GM12878 (cell line): ENCODE measurements at regions of chr3 and their contacts with region 1.

Region 1: GRCh38 chr3:137692803-137693431 is 71.2 kb upstream of the SOX14 start:
- DNase-seq: peak; percentile 3
- ATAC-seq: peak; percentile 86
- H3K4me3 ChIP-seq: no peak overlapping the region
- H3K27ac ChIP-seq: no peak overlapping the region
- H3K4me1 ChIP-seq: no peaks in the 10 kb centered on the region
- H3K27me3 ChIP-seq: no peaks in the 10 kb centered on the region
- CTCF ChIP-seq: peak; percentile 64 to 75 (median 66)
- EP300 ChIP-seq: no peak
- POLR2A ChIP-seq: no peak
- RAD21 ChIP-seq: peak; percentile 80

Region 2: DNA sequence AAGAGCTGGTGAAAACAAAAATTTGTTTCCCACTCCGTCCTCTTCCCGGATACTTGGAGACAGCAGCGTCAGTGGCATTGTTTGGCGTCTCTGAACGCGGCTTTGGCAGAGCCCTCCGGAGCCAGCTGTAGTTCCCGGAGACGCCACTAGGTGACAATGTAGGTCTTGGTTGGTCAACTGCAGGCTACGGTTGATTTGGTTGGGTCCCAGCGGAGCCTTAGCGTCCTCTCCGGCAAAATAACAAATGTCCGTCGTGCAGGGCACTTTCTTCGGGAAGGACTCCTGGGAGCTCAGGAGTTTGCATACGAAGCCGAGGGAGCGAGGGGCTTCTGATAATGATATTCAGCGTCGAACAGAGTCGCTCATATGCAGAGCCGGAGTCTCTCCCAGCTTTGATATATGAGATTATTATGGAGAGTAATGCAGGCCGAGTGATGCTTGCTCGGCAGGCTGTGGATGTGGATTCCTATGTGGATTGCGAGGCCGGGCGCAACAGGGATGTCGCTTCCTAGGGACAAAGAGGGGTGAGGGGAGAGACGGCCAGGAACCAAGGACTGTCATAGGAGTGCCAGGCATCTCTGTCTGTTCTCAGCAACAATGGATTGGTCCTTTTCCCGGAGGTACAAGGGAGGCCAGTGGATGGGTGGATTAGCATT is 660.3 kb before region 1 on chr3:
- CTCF ChIA-PET with region 1: no interaction called
- POLR2A ChIA-PET with region 1: no interaction called
- RAD21 ChIA-PET with region 1: interaction called, 4 read pairs
- SMC1A ChIA-PET with region 1: interaction called, 3 read pairs
- in situ Hi-C with region 1: no loop called
- intact Hi-C with region 1: loop called (anchors 2 kb)
- DNase-seq: peak; percentile 13
- ATAC-seq: peak; percentile 97
- H3K4me3 ChIP-seq: peak overlapping the region; percentile 22; the same call in 1 of the 2 replicates
- H3K27ac ChIP-seq: no peak overlapping the region
- H3K4me1 ChIP-seq: no peaks in the 10 kb centered on the region
- H3K27me3 ChIP-seq: no peaks in the 10 kb centered on the region
- CTCF ChIP-seq: peak; percentile 96 to 100 (median 99)
- EP300 ChIP-seq: no peak
- POLR2A ChIP-seq: no peak
- RAD21 ChIP-seq: peak; percentile 95

Region 3: GRCh38 chr3:137110484-137110883 is 582.4 kb before region 1 on chr3:
- CTCF ChIA-PET with region 1: interaction called, 44 read pairs
- POLR2A ChIA-PET with region 1: no interaction called
- RAD21 ChIA-PET with region 1: interaction called, 22 read pairs
- SMC1A ChIA-PET with region 1: interaction called, 22 read pairs
- in situ Hi-C with region 1: no loop called
- intact Hi-C with region 1: loop called (anchors 2 kb)
- DNase-seq: no peak
- ATAC-seq: peak; percentile 85
- H3K4me3 ChIP-seq: no peak overlapping the region
- H3K27ac ChIP-seq: no peak overlapping the region
- H3K4me1 ChIP-seq: no peaks in the 10 kb centered on the region
- H3K27me3 ChIP-seq: no peaks in the 10 kb centered on the region; a peak in 1 of 4 replicates
- CTCF ChIP-seq: peak; percentile 68 to 89 (median 88)
- EP300 ChIP-seq: no peak
- POLR2A ChIP-seq: no peak
- RAD21 ChIP-seq: peak; percentile 95

Region 4: DNA sequence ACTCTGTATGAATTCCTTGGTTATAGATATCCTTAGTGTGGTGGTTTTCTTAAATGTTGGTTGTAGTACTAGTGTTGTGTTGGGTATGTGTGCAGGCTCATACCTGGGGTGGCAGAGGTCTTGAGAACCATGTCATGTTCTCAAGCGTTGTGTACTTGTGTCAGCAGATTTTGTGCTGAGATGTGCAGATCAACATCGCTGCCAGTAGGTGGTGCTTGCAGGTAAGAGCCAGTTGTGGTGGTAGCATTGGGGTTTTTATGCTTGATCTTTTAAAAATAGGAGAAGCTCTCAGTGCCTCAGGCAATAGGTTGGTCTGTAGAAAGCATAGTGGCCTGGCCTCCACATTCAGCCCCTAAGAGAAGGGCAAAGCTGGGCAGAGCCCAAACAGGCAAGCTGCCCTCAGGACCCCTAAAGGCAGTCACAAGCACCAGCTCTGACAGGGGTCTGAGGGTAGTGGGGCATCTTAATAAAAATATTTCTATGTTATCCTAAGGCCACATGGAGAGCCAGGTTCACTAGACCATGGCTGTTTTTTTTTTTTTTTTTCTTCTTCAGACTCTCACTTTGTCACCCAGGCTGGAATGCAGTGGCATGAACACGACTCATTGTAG is 571.1 kb before region 1 on chr3:
- CTCF ChIA-PET with region 1: interaction called, 12 read pairs
- POLR2A ChIA-PET with region 1: no interaction called
- RAD21 ChIA-PET with region 1: interaction called, 4 read pairs
- SMC1A ChIA-PET with region 1: interaction called, 32 read pairs
- in situ Hi-C with region 1: loop called (anchors 5 kb)
- intact Hi-C with region 1: loop called (anchors 2 kb)
- DNase-seq: peak; percentile 8
- ATAC-seq: peak; percentile 92
- H3K4me3 ChIP-seq: no peak overlapping the region
- H3K27ac ChIP-seq: no peak overlapping the region
- H3K4me1 ChIP-seq: no peaks in the 10 kb centered on the region
- H3K27me3 ChIP-seq: no peaks in the 10 kb centered on the region
- CTCF ChIP-seq: peak; percentile 75 to 81 (median 80)
- EP300 ChIP-seq: no peak
- POLR2A ChIP-seq: no peak
- RAD21 ChIP-seq: peak; percentile 91

Region 5: GRCh38 chr3:137669519-137670060 is 23.3 kb before region 1 on chr3:
- CTCF ChIA-PET with region 1: no interaction called
- POLR2A ChIA-PET with region 1: no interaction called
- RAD21 ChIA-PET with region 1: no interaction called
- SMC1A ChIA-PET with region 1: no interaction called
- in situ Hi-C with region 1: no loop called
- intact Hi-C with region 1: no loop called
- DNase-seq: no peak
- ATAC-seq: no peak
- H3K4me3 ChIP-seq: no peak overlapping the region
- H3K27ac ChIP-seq: no peak overlapping the region
- H3K4me1 ChIP-seq: no peaks in the 10 kb centered on the region
- H3K27me3 ChIP-seq: no peaks in the 10 kb centered on the region
- CTCF ChIP-seq: no peak
- EP300 ChIP-seq: no peak
- POLR2A ChIP-seq: no peak
- RAD21 ChIP-seq: no peak

Region 6: DNA sequence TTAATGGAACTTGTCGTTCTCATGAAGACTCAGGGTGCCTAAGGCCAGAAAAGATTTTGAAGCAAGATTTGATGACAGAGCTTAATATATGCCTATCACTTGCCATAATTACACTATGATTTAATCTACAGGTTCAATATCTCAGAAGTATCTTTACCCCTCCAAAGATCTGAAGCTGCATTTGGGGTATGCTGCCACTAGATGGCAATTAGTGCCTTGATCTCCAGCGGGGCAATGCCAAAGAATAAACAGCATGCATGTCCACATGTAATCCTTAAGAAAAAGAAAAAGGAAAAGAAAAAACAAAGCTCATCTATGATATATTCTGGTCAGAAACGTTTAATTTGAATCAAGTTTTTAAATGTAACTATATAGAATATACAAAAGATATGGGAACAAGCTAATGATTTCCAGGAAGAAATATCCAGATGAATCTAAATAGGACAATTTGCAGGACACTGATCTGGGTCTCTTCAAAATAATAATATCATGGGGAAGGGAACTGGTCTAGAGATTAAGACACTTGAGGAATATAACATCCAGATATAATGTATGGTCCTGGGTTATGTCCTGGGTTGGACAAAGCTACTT is 16.2 kb after region 1 on chr3:
- CTCF ChIA-PET with region 1: interaction called, 10 read pairs
- POLR2A ChIA-PET with region 1: no interaction called
- RAD21 ChIA-PET with region 1: interaction called, 3 read pairs
- SMC1A ChIA-PET with region 1: interaction called, 3 read pairs
- in situ Hi-C with region 1: no loop called
- intact Hi-C with region 1: no loop called
- DNase-seq: no peak
- ATAC-seq: peak; percentile 50; the same call in 1 of the 3 replicates
- H3K4me3 ChIP-seq: no peak overlapping the region
- H3K27ac ChIP-seq: no peak overlapping the region
- H3K4me1 ChIP-seq: no peaks in the 10 kb centered on the region
- H3K27me3 ChIP-seq: no peaks in the 10 kb centered on the region; a peak in 1 of 4 replicates
- CTCF ChIP-seq: peak; percentile 46 to 64 (median 51)
- EP300 ChIP-seq: no peak
- POLR2A ChIP-seq: no peak
- RAD21 ChIP-seq: peak; percentile 65

Region 7: GRCh38 chr3:137743608-137744007 is 50.7 kb after region 1 on chr3:
- CTCF ChIA-PET with region 1: no interaction called
- POLR2A ChIA-PET with region 1: no interaction called
- RAD21 ChIA-PET with region 1: no interaction called
- SMC1A ChIA-PET with region 1: no interaction called
- in situ Hi-C with region 1: no loop called
- intact Hi-C with region 1: no loop called
- DNase-seq: no peak
- ATAC-seq: no peak
- H3K4me3 ChIP-seq: no peak overlapping the region
- H3K27ac ChIP-seq: no peak overlapping the region
- H3K4me1 ChIP-seq: no peaks in the 10 kb centered on the region
- H3K27me3 ChIP-seq: no peaks in the 10 kb centered on the region
- CTCF ChIP-seq: no peak
- EP300 ChIP-seq: no peak
- POLR2A ChIP-seq: no peak
- RAD21 ChIP-seq: no peak